ENCODE measurements at regions of chr3 and their contacts with region 1.

Region 1: DNA sequence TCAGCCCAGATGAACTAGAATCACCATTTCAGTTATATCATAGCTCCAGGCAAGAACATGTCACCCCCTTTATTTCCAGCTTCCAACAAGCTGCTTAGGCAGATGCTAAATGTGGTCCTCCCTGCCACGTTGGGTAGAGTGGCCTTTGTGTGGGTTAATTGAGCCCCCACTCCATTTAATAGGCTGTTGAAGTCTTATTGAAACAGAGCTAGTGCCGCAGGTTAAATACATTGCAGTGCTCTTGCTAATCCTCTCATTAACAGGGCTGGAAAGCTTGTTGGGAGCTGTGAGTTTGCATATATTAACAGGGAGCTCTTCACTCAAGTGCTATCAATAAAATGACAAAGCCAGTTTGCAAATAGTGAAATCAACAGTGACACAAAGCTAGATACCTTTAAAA is 248.4 kb upstream of the CMC1 start:
- DNase-seq: no peak
- H3K4me3 Mint-ChIP-seq: no peak overlapping the region
- H3K27ac Mint-ChIP-seq: no peak overlapping the region
- H3K4me1 Mint-ChIP-seq: no peaks in the 10 kb centered on the region
- H3K27me3 Mint-ChIP-seq: no peaks in the 10 kb centered on the region

Region 2: DNA sequence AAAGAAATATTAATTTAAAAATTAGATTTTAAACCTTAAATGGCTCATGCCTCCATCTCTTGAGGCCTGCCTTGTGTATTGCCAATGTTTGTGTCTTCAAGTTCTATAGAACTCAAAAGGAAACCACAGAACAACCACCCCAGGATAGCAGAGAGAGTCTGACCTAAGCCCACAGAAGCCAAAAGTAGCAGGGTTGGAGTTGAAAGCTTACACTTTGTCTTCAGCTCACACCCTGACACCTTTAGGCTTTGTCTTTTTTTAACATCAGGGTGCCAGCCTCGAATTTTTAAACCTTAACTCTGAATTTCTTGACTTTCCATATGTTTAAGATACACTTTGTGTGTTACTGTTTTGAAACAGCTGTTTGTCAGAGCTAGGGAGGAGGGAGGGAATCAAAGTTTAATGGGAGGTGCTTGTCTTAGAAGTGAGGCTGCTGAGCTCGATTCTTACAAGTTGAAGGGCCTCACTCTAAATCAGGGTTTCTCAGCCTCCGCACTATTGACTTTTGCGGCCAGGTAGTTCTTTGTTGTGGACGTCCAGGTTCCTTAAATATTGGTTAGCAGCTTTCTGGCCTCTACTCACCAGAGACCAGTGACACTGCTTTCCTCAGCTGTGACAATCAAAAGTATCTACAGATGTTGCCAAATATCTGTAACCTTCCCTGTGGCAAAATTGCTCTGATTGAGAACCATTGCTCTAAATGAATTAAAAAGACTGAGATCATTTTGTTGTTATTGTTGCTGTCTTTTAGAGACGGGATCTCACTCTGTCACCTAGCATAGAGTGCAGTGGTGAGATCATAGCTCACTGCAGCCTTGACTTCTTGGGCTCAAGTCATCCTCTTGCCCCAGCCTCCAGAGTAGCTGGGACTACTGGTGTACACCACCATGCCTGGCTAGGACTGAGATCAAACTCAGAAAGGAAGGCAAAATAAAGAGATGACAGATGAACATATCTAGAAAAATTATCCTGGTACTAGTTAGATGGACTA is 131.7 kb before region 1 on chr3:
- intact Hi-C with region 1: no loop called
- DNase-seq: peak; percentile 83
- H3K4me3 Mint-ChIP-seq: peak overlapping the region; percentile 52
- H3K27ac Mint-ChIP-seq: peak overlapping the region; percentile 87
- H3K4me1 Mint-ChIP-seq: peaks cover 19% of the 10 kb centered on the region
- H3K27me3 Mint-ChIP-seq: no peaks in the 10 kb centered on the region

Region 3: DNA sequence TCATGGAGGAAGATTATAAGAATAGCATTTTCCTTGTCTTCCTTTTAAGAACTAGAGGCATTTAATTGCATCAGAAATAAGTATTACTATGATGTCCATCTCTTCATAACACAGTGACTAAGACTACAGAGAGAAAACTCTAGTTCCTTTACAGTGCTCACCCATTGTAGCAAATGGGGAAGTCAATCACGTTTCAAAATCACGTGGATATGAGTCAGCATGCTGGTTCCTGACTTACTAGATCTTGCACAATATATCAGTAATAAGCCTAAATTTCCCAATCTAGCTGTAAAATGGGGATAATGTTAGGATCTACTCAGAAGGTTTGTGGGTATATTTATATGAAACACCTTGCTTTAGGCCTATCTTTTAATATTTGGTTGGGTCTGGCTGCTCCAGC is 16.1 kb before region 1 on chr3:
- intact Hi-C with region 1: loop called (anchors 2 kb)
- DNase-seq: no peak
- H3K4me3 Mint-ChIP-seq: no peak overlapping the region
- H3K27ac Mint-ChIP-seq: no peak overlapping the region
- H3K4me1 Mint-ChIP-seq: peaks cover 4% of the 10 kb centered on the region
- H3K27me3 Mint-ChIP-seq: no peaks in the 10 kb centered on the region